ENCODE measurements at regions of chr6 and their contacts with region 1.

Region 1: DNA sequence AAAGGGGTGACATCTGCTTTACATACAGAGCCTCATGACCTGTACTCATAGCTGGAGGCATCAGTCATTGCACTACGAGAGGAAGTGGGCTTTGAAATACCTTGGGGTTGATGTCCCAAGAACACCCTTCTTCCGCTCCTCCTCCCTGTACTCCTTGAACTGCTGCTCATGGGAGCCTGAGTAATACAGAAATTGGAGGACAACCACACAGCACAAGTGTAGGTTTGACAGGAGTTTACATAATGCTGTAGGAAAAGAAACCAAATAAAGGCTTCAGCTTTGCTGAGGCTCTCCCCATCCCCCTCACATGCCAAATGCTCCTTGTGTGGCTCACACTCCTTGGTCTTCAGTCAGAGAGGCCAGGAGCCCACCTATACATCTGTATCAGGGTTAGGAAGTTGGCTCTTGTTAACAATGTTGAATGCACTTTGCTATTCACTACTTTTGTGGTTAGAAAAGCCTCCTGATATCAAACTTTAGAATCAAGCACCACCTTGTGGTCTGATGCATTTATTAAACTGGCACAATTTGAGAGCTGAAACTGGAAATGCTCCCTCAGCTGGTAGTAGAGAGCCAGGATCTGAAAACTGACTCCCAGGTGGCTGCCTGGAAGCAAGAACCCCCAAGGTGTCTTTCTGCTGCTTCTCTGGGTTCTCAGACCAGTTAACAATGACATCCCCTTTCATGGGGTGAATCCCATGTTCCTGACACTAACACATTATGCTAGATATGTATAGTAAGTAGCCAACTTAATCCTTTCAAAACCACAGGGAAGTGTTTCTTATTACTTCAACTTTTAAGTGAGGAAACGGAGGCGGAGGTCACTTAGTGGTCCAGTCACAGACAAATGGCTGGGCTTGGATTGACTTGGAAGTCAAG is 56.2 kb upstream of the EDN1 start:
- DNase-seq: peak; percentile 47 to 84
- H3K4me3 ChIP-seq: no peak overlapping the region
- H3K27ac ChIP-seq: no peak overlapping the region
- H3K4me1 ChIP-seq: peaks cover 5% of the 10 kb centered on the region
- H3K27me3 ChIP-seq: no peaks in the 10 kb centered on the region
- CTCF ChIP-seq: peak; percentile 95

Region 2: GRCh38 chr6:11700118-11700718 is 533.7 kb before region 1 on chr6:
- CTCF ChIA-PET with region 1: no interaction called
- POLR2A ChIA-PET with region 1: no interaction called
- intact Hi-C with region 1: loop called (anchors 1 kb)
- DNase-seq: peak in 1 of 2 experiments; percentile 59
- H3K4me3 ChIP-seq: no peak overlapping the region
- H3K27ac ChIP-seq: no peak overlapping the region
- H3K4me1 ChIP-seq: no peaks in the 10 kb centered on the region
- H3K27me3 ChIP-seq: no peaks in the 10 kb centered on the region
- CTCF ChIP-seq: peak; percentile 73

Region 3: GRCh38 chr6:12090714-12091113 is 143.2 kb before region 1 on chr6:
- CTCF ChIA-PET with region 1: no interaction called
- POLR2A ChIA-PET with region 1: no interaction called
- intact Hi-C with region 1: no loop called
- DNase-seq: no peak
- H3K4me3 ChIP-seq: no peak overlapping the region
- H3K27ac ChIP-seq: no peak overlapping the region
- H3K4me1 ChIP-seq: no peaks in the 10 kb centered on the region
- H3K27me3 ChIP-seq: no peaks in the 10 kb centered on the region
- CTCF ChIP-seq: no peak

Region 4: GRCh38 chr6:12150812-12151432 is 83.0 kb before region 1 on chr6:
- CTCF ChIA-PET with region 1: no interaction called
- POLR2A ChIA-PET with region 1: no interaction called
- intact Hi-C with region 1: loop called (anchors 1 kb)
- DNase-seq: peak in 1 of 2 experiments; percentile 47
- H3K4me3 ChIP-seq: no peak overlapping the region
- H3K27ac ChIP-seq: no peak overlapping the region; the same call in 1 of the 2 replicates
- H3K4me1 ChIP-seq: peaks cover 30% of the 10 kb centered on the region
- H3K27me3 ChIP-seq: no peaks in the 10 kb centered on the region
- CTCF ChIP-seq: peak; percentile 81

Region 5: DNA sequence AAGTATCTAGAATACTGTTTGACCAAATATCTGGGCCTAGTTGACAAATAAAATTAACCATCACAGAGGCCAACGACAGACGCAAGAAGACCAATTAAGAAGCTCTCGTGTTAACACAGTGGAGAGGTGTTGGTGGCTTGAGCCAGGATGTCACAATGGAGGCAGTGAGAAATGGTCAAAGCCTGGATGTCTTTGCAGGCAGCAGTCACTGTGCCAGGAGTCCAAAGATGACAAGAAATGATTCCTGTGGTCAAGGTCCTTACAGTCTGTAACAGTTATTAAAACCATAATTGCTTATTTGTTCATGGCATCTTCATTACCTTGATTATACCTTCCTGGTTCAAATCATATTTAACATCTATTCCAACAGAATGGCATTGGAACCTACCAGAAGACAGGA is 35.1 kb before region 1 on chr6:
- CTCF ChIA-PET with region 1: no interaction called
- POLR2A ChIA-PET with region 1: interaction called, 11 read pairs
- intact Hi-C with region 1: no loop called
- DNase-seq: no peak
- H3K4me3 ChIP-seq: no peak overlapping the region
- H3K27ac ChIP-seq: no peak overlapping the region
- H3K4me1 ChIP-seq: no peaks in the 10 kb centered on the region
- H3K27me3 ChIP-seq: no peaks in the 10 kb centered on the region
- CTCF ChIP-seq: no peak

Region 6: GRCh38 chr6:12679341-12679740 is 445.4 kb after region 1 on chr6:
- CTCF ChIA-PET with region 1: no interaction called
- POLR2A ChIA-PET with region 1: no interaction called
- intact Hi-C with region 1: no loop called
- DNase-seq: no peak
- H3K4me3 ChIP-seq: no peak overlapping the region
- H3K27ac ChIP-seq: no peak overlapping the region
- H3K4me1 ChIP-seq: no peaks in the 10 kb centered on the region
- H3K27me3 ChIP-seq: peaks cover 52% of the 10 kb centered on the region
- CTCF ChIP-seq: no peak